ENCODE measurements at regions of chr14 and their contacts with region 1.

Region 1: GRCh38 chr14:61269321-61270083 is 11.6 kb downstream of the TMEM30B start:
- H3K4me3 ChIP-seq: peak overlapping the region; percentile 42
- H3K27ac ChIP-seq: no peak overlapping the region; the same call in 1 of the 2 replicates
- H3K4me1 ChIP-seq: 0 out of 2 replicates have a peak, but pooled peaks cover 1% of the 10 kb centered on the region
- CTCF ChIP-seq: peak; percentile 70; the same call in 1 of the 2 replicates

Region 2: DNA sequence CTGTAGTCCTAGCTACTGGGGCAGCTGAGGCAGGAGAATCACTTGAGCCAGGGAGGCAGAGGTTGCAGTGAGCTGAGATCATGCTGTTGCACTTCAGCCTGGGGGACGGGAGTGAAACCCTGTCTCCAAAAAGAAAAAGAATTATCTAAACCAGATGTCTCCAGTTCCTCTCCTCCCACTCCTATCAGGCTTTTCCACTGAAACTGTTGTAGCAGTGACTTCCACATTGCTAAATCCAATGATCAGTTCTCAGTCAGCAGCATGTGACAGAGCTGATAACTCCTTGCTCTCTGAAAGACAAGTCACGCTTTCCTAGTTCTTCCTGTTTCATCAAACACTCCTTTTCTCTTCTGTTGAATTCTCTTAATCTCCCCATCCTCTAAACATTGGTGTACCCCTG is 279.9 kb before region 1 on chr14:
- CTCF ChIA-PET with region 1: no interaction called
- POLR2A ChIA-PET with region 1: no interaction called
- H3K4me3 ChIP-seq: no peak overlapping the region
- H3K27ac ChIP-seq: no peak overlapping the region
- H3K4me1 ChIP-seq: no peaks in the 10 kb centered on the region
- CTCF ChIP-seq: no peak

Region 3: GRCh38 chr14:61287196-61287595 is 17.7 kb after region 1 on chr14:
- CTCF ChIA-PET with region 1: interaction called, 19 read pairs
- POLR2A ChIA-PET with region 1: no interaction called
- H3K4me3 ChIP-seq: no peak overlapping the region
- H3K27ac ChIP-seq: no peak overlapping the region
- H3K4me1 ChIP-seq: no peaks in the 10 kb centered on the region; the same call in 1 of the 2 replicates
- CTCF ChIP-seq: no peak

Region 4: DNA sequence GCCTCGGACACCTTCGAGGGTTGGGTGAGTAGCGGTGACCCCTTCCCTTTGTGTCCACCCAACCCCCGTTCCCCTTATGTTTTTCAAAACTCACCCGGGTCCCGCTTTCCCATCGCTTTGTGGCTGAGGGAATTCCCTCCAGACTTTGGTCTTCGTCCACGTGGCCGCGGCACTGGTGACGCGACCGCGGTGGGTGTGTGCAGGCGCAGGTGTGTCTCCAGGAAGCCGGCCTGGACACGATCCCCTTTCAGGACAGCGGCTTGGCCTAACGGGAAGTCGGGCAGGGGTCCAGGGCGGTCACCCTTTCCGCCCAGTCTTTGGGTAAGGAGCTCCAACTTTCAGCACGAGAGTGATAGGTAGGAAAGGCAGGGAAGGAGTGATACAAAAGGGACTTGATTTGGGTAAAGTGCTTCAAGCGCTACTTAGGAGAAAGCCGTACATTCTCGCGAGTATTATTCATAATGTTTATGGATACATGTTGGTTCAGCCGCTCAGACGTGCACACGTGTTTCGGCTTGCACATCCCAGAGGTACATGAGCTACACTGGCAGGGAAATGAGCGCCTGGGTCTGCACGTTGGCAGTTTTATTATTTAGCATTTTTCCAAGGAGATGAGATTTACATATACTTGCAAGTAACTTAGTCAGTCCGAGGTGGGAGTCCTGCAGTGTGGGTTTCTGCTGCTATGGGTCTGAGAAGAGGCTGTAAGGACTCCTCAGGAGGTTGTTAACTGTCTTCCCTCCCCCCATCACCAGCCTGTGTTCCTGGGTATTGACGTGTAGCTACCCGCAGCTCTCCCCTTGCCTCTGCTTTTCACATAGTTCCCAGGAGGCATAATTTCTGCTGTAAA is 53.2 kb after region 1 on chr14:
- CTCF ChIA-PET with region 1: no interaction called
- POLR2A ChIA-PET with region 1: no interaction called
- H3K4me3 ChIP-seq: peak overlapping the region; percentile 54
- H3K27ac ChIP-seq: peak overlapping the region; percentile 56; the same call in 1 of the 2 replicates
- H3K4me1 ChIP-seq: no peaks in the 10 kb centered on the region
- CTCF ChIP-seq: no peak

Region 5: DNA sequence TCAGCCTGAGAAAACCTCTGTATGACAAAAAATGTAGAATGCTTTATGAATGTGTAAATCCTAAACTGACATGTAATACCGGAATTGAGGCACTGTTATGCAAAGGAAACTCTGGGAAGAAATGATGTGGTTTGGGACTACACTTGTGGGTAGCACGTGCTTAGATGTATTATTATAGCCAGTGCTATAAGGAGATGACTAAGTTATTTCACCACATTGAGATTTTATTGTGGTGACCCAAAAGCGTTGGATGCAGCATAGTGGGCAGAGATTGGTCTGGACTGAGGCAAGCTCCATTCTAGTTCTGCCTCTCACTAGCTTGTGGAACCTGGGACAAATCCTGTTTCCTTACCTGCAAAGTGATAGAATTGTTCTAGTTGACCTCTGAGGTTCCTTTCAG is 664.9 kb after region 1 on chr14:
- CTCF ChIA-PET with region 1: no interaction called
- POLR2A ChIA-PET with region 1: no interaction called
- H3K4me3 ChIP-seq: no peak overlapping the region
- H3K27ac ChIP-seq: no peak overlapping the region
- H3K4me1 ChIP-seq: no peaks in the 10 kb centered on the region
- CTCF ChIP-seq: no peak

Measured in HEK293 (cell line).